Cardiac septum (tissue), 1 donor: ENCODE measurements at regions of chr9 and their contacts with region 1.

Region 1: GRCh38 chr9:2125906-2126305 is 110.8 kb downstream of the SMARCA2 start:
- DNase-seq: no peak

Region 2: GRCh38 chr9:2837915-2838314 is 712.0 kb after region 1 on chr9:
- intact Hi-C with region 1: loop called (anchors 5 kb)
- DNase-seq: no peak